Aorta (tissue), 5 donors: ENCODE measurements at regions of chr4 and their contacts with region 1.

Region 1: DNA sequence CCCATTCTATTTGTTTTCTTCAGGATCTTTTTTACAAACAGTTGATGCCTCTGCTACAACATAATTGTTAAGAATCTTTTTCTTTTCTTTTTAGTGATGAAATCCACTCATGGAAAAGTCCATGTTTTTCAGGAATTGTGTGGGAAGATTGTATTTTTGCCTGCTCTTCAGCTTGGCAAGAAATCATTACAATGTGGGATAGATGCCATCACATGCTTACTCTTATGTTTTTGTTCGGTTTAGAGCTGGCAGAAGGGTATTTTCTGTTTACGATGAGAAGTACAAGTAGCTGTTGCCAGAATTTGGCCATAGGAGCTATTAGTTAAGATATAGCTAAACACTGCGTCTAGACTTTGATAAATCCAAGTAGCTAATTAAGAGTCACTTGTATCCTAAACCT is 2585.3 kb downstream of the ARAP2 start:
- DNase-seq: no peak
- ATAC-seq: no peak
- H3K4me3 ChIP-seq: no peak overlapping the region
- H3K27ac ChIP-seq: no peak overlapping the region
- H3K4me1 ChIP-seq: no peaks in the 10 kb centered on the region
- H3K27me3 ChIP-seq: no peaks in the 10 kb centered on the region

Region 2: DNA sequence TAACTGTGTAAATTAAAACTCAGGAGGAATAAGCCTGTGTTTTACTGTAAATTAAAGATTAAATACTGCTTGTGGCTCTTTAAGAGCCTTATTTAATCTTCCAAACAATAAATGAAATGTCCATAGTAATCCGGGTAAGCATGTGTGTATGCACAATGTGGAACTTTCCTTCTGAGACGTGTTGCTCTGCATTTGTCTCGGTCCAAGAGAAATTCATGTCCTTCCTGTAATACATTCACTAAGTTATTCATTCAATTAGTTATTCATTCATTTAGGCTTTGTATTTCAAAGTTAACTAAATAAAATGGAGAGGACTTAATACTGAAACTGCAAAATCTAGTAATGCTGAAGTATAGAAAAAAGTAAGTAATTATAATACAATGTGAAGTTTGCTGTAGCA is 210.0 kb before region 1 on chr4:
- intact Hi-C with region 1: no loop called
- DNase-seq: no peak
- ATAC-seq: no peak
- H3K4me3 ChIP-seq: no peak overlapping the region
- H3K27ac ChIP-seq: no peak overlapping the region
- H3K4me1 ChIP-seq: no peaks in the 10 kb centered on the region
- H3K27me3 ChIP-seq: no peaks in the 10 kb centered on the region

Region 3: GRCh38 chr4:34009951-34010350 is 351.0 kb after region 1 on chr4:
- intact Hi-C with region 1: no loop called
- DNase-seq: no peak
- ATAC-seq: no peak
- H3K4me3 ChIP-seq: no peak overlapping the region
- H3K27ac ChIP-seq: no peak overlapping the region
- H3K4me1 ChIP-seq: no peaks in the 10 kb centered on the region
- H3K27me3 ChIP-seq: no peaks in the 10 kb centered on the region

Region 4: GRCh38 chr4:34193451-34194154 is 534.6 kb after region 1 on chr4:
- intact Hi-C with region 1: loop called in 1 of 2 experiments (anchors 10 kb)
- DNase-seq: no peak
- ATAC-seq: no peak
- H3K4me3 ChIP-seq: no peak overlapping the region
- H3K27ac ChIP-seq: no peak overlapping the region
- H3K4me1 ChIP-seq: no peaks in the 10 kb centered on the region
- H3K27me3 ChIP-seq: no peaks in the 10 kb centered on the region